Endothelial cell of umbilical vein (primary cell): ENCODE measurements at regions of chr13 and their contacts with region 1.

Region 1: GRCh38 chr13:76980075-76980718 is 11.7 kb upstream of the CLN5 start:
- DNase-seq: peak; percentile 52
- H3K4me3 ChIP-seq: no peak overlapping the region
- H3K27ac ChIP-seq: no peak overlapping the region
- H3K4me1 ChIP-seq: peaks cover 2% of the 10 kb centered on the region
- H3K27me3 ChIP-seq: peaks cover 16 to 24% of the 10 kb centered on the region in 2 experiments
- CTCF ChIP-seq: peak; percentile 95 to 100
- POLR2A ChIP-seq: no peak

Region 2: DNA sequence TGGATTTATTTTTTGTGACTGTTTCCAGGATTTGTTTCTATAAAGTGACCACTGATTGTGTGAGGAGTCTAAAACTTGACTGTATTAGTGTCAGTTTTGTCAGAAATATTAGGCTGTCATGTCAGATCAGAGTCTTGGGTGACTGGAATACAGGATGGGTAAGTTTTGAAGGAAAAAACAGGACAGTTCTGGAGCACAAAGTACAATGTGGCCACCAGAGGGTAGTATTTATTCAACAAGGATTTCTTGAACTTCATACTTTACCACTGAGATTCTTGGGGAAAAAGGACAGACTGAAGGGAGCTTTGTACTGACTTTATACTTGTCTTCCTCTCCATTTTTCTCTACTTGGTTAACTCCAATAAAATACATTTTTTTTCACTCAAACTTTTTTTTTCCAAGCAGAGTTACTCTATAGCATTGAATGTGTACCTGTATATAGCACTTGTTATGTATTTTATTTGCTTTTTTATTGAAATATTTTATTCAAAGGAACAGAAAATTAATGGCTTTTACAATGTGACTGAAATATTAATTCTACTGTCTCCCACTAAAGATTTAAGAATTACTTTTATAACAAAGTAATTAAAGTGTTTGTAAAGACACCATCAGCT is 1292.9 kb before region 1 on chr13:
- CTCF ChIA-PET with region 1: interaction called, 10 read pairs
- POLR2A ChIA-PET with region 1: no interaction called
- dilution Hi-C with region 1: no loop called
- intact Hi-C with region 1: no loop called
- DNase-seq: peak; percentile 41
- H3K4me3 ChIP-seq: no peak overlapping the region
- H3K27ac ChIP-seq: no peak overlapping the region
- H3K4me1 ChIP-seq: no peaks in the 10 kb centered on the region
- H3K27me3 ChIP-seq: no peaks in the 10 kb centered on the region
- CTCF ChIP-seq: peak; percentile 35 to 50
- POLR2A ChIP-seq: no peak

Region 3: GRCh38 chr13:75876360-75877050 is 1103.7 kb before region 1 on chr13:
- CTCF ChIA-PET with region 1: interaction called, 23 read pairs
- POLR2A ChIA-PET with region 1: no interaction called
- dilution Hi-C with region 1: no loop called
- intact Hi-C with region 1: loop called (anchors 1 kb)
- DNase-seq: peak; percentile 74
- H3K4me3 ChIP-seq: no peak overlapping the region
- H3K27ac ChIP-seq: no peak overlapping the region
- H3K4me1 ChIP-seq: no peaks in the 10 kb centered on the region
- H3K27me3 ChIP-seq: peaks cover 0 to 2% of the 10 kb centered on the region in 2 experiments
- CTCF ChIP-seq: peak; percentile 76 to 78
- POLR2A ChIP-seq: no peak

Region 4: GRCh38 chr13:76822698-76823267 is 157.4 kb before region 1 on chr13:
- CTCF ChIA-PET with region 1: interaction called, 3 read pairs
- POLR2A ChIA-PET with region 1: no interaction called
- dilution Hi-C with region 1: no loop called
- intact Hi-C with region 1: loop called (anchors 2 kb)
- DNase-seq: peak; percentile 71
- H3K4me3 ChIP-seq: no peak overlapping the region
- H3K27ac ChIP-seq: no peak overlapping the region
- H3K4me1 ChIP-seq: no peaks in the 10 kb centered on the region
- H3K27me3 ChIP-seq: no peaks in the 10 kb centered on the region
- CTCF ChIP-seq: peak in 1 of 2 donors; percentile 8
- POLR2A ChIP-seq: no peak

Region 5: DNA sequence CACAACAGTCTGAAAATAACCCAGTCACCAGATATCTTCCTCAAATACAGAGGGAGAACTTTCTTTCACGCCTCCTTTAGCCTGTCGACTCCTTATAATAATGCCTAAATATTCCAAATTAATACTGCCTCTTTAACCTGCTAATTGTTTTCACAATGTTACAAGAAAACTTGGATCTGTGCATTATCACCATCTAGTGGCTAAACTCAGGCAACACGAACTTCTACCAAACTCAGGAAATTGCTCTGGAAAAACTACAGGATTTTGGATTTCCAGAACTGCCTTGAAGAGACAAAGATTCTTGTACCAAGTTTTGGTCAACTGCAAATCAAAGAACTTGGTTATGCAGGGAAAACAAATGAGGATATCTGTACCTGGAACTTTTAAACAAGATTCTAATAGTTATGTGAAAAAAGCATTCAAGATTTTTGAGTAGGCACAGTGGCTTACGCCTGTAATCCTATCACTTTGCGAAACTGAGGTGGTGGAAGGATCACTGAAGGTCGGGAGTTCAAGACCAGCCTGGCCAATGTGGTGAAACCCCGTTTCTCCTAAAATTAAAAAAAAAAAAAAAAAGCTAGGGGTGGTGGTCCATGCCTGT is 22.5 kb after region 1 on chr13:
- CTCF ChIA-PET with region 1: interaction called, 15 read pairs
- POLR2A ChIA-PET with region 1: no interaction called
- dilution Hi-C with region 1: no loop called
- intact Hi-C with region 1: loop called (anchors 1 kb)
- DNase-seq: peak; percentile 57
- H3K4me3 ChIP-seq: no peak overlapping the region
- H3K27ac ChIP-seq: no peak overlapping the region
- H3K4me1 ChIP-seq: no peaks in the 10 kb centered on the region
- H3K27me3 ChIP-seq: no peaks in the 10 kb centered on the region
- CTCF ChIP-seq: peak; percentile 55 to 67
- POLR2A ChIP-seq: no peak